ENCODE measurements at regions of chr2 and their contacts with region 1.

Region 1: GRCh38 chr2:43484323-43484930 is 111.4 kb downstream of the THADA start:
- DNase-seq: peak; percentile 50
- H3K4me3 ChIP-seq: no peak overlapping the region
- H3K27ac ChIP-seq: no peak overlapping the region
- H3K4me1 ChIP-seq: peaks cover 9% of the 10 kb centered on the region
- H3K27me3 ChIP-seq: no peaks in the 10 kb centered on the region
- CTCF ChIP-seq: peak; percentile 45 to 51

Region 2: DNA sequence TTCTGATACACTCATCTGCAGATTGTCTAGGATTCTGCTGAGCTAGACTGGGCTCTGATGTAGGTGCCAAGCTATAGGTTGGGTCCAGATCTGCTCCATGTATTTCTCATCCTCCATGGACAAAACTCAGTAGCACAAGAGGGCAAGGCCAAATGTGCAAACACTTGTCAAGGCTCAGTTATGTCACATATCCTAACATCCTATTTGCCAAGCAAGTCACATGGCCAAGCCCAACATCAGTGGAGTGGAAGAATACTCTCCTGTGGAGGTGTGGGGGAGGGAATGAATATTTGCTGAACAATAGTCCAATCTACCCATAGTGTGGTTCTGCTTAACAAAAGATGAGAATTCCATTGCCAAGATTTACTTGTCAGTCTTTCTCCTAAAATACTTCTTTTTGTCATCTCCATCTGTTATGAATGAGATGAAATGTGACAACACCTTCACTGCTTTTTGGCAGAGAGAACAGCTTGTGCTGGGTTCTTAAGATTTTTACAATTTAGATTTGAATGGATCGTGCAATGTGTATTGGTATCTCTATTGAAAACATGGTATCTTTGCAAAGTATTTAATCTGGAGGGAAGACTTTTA is 810.3 kb before region 1 on chr2:
- CTCF ChIA-PET with region 1: no interaction called
- dilution Hi-C with region 1: no loop called
- in situ Hi-C with region 1: no loop called
- intact Hi-C with region 1: no loop called
- DNase-seq: no peak
- H3K4me3 ChIP-seq: no peak overlapping the region
- H3K27ac ChIP-seq: no peak overlapping the region
- H3K4me1 ChIP-seq: no peaks in the 10 kb centered on the region
- H3K27me3 ChIP-seq: no peaks in the 10 kb centered on the region
- CTCF ChIP-seq: no peak

Region 3: DNA sequence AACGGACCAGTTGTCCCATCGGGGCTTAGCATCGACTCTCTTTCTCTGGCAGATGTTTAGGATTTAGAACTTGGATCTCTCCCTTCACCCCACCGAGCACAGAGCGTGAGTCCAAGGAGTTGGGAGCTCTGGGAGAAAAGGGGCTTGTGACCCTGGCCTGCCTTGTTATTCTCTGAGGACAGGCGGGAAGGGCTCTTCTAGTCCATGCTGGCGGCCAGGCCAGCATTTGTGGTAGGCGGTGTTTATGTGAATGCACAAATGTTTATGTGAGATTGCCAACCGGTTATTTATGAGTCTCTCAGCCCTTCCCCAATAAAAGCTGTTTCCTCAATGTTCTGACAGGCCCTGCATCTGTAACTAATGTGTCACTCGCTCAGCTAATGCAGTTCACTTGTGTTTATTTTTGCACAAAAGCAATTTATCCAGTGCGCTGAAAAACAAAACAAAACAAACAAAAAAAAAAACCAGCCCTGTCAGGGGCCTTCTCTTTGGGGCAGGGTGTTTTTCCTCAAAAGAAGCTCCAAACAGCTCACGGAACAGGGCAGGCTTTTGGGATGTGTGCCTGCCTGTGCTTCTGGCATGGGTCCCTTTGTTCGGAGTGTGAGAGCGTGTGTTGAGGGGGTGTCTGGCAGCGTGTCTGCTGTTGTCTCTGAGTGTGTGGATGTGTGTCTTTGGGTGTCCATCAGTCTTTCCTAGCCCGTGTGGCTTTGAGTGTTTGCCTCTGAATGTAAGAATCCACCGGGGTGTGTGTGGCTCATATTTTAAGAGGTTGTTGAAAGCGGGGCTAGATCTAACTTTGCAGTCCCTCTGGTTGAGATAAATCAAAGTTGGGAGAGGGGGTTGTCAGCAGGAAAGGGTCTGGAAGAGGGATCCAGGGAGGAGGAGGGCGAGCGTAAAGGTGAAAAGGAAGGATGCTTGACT is 639.3 kb before region 1 on chr2:
- CTCF ChIA-PET with region 1: no interaction called
- dilution Hi-C with region 1: no loop called
- in situ Hi-C with region 1: loop called in 1 of 2 experiments (anchors 10 kb)
- intact Hi-C with region 1: no loop called
- DNase-seq: no peak
- H3K4me3 ChIP-seq: no peak overlapping the region
- H3K27ac ChIP-seq: no peak overlapping the region
- H3K4me1 ChIP-seq: no peaks in the 10 kb centered on the region
- H3K27me3 ChIP-seq: no peaks in the 10 kb centered on the region
- CTCF ChIP-seq: no peak

Region 4: DNA sequence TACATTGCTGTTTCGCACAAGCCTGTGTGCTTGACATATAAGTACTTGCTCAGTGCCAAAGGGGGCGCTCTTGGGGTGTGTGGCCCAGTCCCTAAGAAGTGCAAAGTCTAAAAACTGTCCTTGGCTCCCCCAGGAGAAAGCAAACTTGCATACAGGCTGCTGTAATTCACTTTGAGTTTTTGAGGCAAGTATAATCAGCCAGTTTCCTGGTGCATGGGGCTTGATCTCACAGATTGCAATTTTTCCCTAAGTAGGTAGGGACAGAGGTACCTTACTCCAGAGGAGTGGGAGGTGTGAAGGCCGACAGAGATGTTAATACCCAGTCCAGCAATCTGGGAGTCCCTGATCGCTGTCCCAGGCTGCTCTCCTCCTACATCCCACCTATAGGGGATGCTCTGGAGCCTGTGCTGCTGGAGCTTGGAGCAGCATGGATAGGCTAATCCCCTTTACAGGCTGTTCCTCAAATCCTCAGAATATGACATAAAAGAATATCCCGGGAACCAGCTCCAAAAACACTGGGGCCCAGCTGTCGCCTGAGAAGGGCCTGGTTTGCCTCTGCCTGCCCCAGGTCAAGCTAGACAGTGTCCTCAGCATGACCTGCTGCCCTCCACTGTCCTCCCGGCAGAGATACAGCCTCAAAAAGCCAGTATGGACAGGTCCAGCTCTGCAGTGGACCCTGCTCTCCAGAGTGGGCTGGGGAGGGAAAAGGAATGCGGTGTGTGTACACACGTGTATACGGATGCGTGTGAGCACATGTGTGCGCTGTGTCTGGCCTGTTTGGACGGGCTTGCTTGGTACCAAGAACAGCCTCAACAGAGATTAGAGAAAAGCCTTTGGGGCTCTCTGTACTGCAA is 555.5 kb before region 1 on chr2:
- CTCF ChIA-PET with region 1: no interaction called
- dilution Hi-C with region 1: no loop called
- in situ Hi-C with region 1: loop called in 1 of 2 experiments (anchors 10 kb)
- intact Hi-C with region 1: no loop called
- DNase-seq: no peak
- H3K4me3 ChIP-seq: no peak overlapping the region
- H3K27ac ChIP-seq: no peak overlapping the region
- H3K4me1 ChIP-seq: peaks cover 37% of the 10 kb centered on the region
- H3K27me3 ChIP-seq: no peaks in the 10 kb centered on the region
- CTCF ChIP-seq: peak in 1 of 2 donors; percentile 47

Region 5: DNA sequence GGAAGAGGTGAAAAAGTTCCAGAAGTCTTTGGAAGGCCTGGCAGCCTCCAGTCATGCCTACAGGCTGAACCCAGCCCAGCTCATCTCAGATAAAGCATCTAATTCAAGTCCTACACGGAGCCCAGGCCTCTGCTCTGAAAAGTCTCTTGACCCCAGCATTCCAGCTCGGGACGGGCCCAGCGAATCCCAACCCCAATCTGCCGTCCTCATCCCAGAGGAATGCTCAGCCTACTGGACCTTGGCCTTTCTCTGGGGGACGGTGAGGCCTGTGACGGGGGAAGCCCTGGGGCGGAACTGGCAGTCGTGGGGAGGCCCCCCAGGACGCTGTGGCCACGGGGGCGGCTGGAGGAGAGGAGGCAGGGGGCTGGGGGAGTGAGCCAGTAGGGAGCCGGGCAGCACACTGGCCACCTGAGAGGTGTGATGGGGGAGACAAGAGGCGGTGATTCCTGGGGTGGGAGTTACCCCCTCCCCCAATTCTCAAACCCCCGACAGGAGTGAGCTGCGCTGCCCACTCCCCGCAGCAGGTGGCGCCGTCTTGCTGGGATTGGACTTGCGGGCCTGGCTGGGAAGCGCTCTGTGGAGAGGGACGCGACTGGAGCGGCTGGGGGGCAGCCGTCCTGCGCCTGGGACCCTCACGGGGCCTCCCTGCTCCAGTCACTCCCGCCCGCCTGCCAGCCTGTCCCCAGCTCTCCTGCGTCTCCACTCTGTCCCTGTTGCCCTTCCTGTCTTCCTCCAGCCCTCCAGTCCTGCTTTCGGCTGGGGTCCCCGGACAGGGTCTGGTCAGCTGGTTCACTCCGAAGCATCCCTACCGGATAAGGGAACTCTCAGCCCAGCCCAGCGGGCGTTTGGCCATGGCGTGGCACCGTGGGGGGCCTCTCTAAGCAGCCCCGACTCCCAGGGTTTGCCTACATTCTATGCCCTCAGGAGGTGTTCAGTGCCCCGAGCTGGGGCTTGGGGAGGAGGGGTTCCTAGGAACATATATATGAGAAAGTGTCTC is 509.4 kb before region 1 on chr2:
- CTCF ChIA-PET with region 1: no interaction called
- dilution Hi-C with region 1: no loop called
- in situ Hi-C with region 1: no loop called
- intact Hi-C with region 1: loop called (anchors 1 kb)
- DNase-seq: no peak
- H3K4me3 ChIP-seq: no peak overlapping the region
- H3K27ac ChIP-seq: peak overlapping the region; percentile 11
- H3K4me1 ChIP-seq: peaks cover 46% of the 10 kb centered on the region
- H3K27me3 ChIP-seq: no peaks in the 10 kb centered on the region
- CTCF ChIP-seq: peak; percentile 80 to 92

Region 6: GRCh38 chr2:43251171-43251731 is 233.2 kb before region 1 on chr2:
- CTCF ChIA-PET with region 1: no interaction called
- dilution Hi-C with region 1: no loop called
- in situ Hi-C with region 1: no loop called
- intact Hi-C with region 1: loop called (anchors 2 kb)
- DNase-seq: peak; percentile 64
- H3K4me3 ChIP-seq: no peak overlapping the region
- H3K27ac ChIP-seq: peak overlapping the region; percentile 0
- H3K4me1 ChIP-seq: peaks cover 20% of the 10 kb centered on the region
- H3K27me3 ChIP-seq: no peaks in the 10 kb centered on the region
- CTCF ChIP-seq: no peak

Region 7: DNA sequence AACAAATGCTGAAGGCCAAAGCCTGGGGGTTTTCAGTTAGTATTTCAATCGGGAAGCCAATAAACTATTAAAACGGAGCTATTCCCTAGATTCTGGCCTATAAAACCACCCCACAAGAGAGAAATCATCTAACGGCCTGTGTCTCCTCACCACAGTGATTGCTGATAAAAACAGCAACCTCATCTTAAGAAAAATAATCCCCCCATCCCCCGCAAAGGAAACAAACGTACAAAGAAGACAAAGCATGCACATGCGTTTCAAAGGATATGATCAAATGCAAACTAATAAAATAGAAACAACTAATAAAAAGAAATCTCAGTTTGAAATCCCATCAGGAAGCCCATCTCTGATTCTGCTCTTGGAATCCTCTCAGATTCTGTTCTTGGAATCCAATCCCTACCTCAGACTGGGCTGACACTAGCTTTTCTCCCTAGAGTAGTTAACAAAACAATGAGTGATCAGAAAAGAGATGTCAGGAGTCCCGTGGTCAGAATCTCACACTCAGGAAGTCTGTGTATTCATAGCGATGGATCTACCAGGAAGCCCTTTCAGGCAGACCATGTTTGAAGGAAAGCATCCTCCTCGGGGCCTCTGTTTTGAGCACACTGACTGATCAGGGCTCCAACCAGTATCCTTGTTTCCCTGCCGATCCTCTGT is 39.3 kb before region 1 on chr2:
- CTCF ChIA-PET with region 1: no interaction called
- dilution Hi-C with region 1: no loop called
- in situ Hi-C with region 1: no loop called
- intact Hi-C with region 1: no loop called
- DNase-seq: no peak
- H3K4me3 ChIP-seq: no peak overlapping the region
- H3K27ac ChIP-seq: no peak overlapping the region
- H3K4me1 ChIP-seq: no peaks in the 10 kb centered on the region
- H3K27me3 ChIP-seq: no peaks in the 10 kb centered on the region
- CTCF ChIP-seq: no peak